ENCODE measurements at regions of chr4 and their contacts with region 1.

Region 1: DNA sequence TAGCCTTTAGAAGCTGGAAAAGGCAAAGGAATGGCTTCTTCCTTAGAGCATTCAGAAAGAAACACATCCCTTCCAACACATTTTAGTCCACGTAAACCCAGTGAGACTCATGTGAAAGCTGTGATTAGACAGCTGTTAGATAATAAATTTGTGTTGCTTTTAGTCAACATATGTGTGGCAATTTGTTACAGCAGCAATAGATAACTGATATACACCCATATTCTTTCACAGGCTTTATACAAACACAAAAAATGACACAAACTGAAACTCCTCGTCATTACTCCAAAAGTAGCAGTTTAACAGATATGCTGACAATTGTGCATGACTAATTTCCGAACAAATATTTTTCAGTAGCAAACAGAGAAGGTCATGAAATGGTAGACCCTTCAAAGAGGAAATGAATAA is 65.3 kb downstream of the ANTXR2 start:
- DNase-seq: no peak
- H3K4me3 Mint-ChIP-seq: no peak overlapping the region
- H3K27ac Mint-ChIP-seq: peak overlapping the region; percentile 78
- H3K4me1 Mint-ChIP-seq: peaks cover 60% of the 10 kb centered on the region
- H3K27me3 Mint-ChIP-seq: no peaks in the 10 kb centered on the region

Region 2: GRCh38 chr4:78945651-78946179 is 1062.0 kb before region 1 on chr4:
- intact Hi-C with region 1: loop called (anchors 5 kb)
- DNase-seq: no peak
- H3K4me3 Mint-ChIP-seq: no peak overlapping the region
- H3K27ac Mint-ChIP-seq: no peak overlapping the region
- H3K4me1 Mint-ChIP-seq: peaks cover 26% of the 10 kb centered on the region
- H3K27me3 Mint-ChIP-seq: peaks cover 62% of the 10 kb centered on the region

Region 3: GRCh38 chr4:79759793-79760192 is 248.0 kb before region 1 on chr4:
- intact Hi-C with region 1: no loop called
- DNase-seq: no peak
- H3K4me3 Mint-ChIP-seq: no peak overlapping the region
- H3K27ac Mint-ChIP-seq: no peak overlapping the region
- H3K4me1 Mint-ChIP-seq: no peaks in the 10 kb centered on the region
- H3K27me3 Mint-ChIP-seq: no peaks in the 10 kb centered on the region

Region 4: GRCh38 chr4:79831701-79832514 is 175.8 kb before region 1 on chr4:
- intact Hi-C with region 1: loop called (anchors 5 kb)
- DNase-seq: no peak
- H3K4me3 Mint-ChIP-seq: no peak overlapping the region
- H3K27ac Mint-ChIP-seq: no peak overlapping the region
- H3K4me1 Mint-ChIP-seq: peaks cover 4% of the 10 kb centered on the region
- H3K27me3 Mint-ChIP-seq: peaks cover 20% of the 10 kb centered on the region

Region 5: DNA sequence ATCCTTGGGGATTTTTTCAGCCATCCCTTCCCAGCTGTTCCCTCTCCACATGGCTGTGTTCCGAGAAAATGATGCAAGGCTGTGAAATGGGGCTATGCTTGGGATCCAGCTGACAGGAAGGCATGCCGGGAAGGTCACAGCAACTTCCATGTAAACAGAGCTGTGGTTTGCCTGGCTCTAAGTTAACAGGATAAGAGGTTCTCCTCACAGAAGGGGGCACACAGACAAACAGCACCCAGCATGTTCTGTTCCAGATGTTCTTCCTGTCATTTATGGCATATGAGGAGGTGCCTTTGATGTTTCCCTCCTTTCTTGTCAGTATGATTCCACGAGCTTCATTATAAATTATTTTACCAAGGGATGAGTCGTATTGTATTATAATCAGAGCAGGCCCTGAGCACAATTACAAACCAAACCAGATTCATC is 155.4 kb before region 1 on chr4:
- intact Hi-C with region 1: no loop called
- DNase-seq: no peak
- H3K4me3 Mint-ChIP-seq: no peak overlapping the region
- H3K27ac Mint-ChIP-seq: no peak overlapping the region
- H3K4me1 Mint-ChIP-seq: no peaks in the 10 kb centered on the region
- H3K27me3 Mint-ChIP-seq: no peaks in the 10 kb centered on the region

Region 6: GRCh38 chr4:80058740-80059139 is 51.0 kb after region 1 on chr4:
- intact Hi-C with region 1: loop called (anchors 1 kb)
- DNase-seq: peak; percentile 41
- H3K4me3 Mint-ChIP-seq: peak overlapping the region; percentile 72
- H3K27ac Mint-ChIP-seq: peak overlapping the region; percentile 94
- H3K4me1 Mint-ChIP-seq: peaks cover 42% of the 10 kb centered on the region
- H3K27me3 Mint-ChIP-seq: no peaks in the 10 kb centered on the region

Region 7: DNA sequence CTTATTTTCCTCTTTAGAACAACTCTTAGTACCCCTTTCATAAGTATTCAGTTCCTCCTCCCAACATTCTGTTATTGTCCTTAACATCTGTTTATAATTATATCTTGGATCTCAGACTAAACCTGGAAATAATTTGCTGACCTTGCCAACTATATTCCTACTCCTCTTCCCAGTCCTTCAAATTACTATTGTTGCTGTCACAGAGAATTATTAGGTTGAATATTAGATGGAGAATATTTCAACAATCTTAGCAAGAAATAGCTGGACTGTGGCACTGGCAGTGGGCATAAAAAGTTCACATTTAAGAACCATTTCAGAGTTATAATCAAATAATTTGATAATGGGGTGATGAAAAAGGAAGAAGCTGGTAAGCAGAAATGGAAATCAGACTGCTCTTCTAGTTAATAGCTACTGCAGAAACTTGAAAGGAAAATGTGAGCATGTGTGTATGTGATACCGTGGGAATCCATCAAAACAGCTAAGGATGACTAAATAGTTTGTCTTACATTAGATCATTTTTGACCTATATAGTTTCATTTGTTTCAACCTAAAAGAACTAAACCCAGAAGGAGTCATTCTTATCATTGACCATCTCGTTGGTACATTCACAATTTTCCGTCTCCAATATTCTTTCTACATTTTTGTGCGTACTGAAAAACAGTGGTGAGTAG is 146.3 kb after region 1 on chr4:
- intact Hi-C with region 1: loop called (anchors 5 kb)
- DNase-seq: no peak
- H3K4me3 Mint-ChIP-seq: peak overlapping the region; percentile 59
- H3K27ac Mint-ChIP-seq: peak overlapping the region; percentile 97
- H3K4me1 Mint-ChIP-seq: peaks cover 18% of the 10 kb centered on the region
- H3K27me3 Mint-ChIP-seq: peaks cover 3% of the 10 kb centered on the region